ENCODE measurements at regions of chr10 and their contacts with region 1.

Region 1: DNA sequence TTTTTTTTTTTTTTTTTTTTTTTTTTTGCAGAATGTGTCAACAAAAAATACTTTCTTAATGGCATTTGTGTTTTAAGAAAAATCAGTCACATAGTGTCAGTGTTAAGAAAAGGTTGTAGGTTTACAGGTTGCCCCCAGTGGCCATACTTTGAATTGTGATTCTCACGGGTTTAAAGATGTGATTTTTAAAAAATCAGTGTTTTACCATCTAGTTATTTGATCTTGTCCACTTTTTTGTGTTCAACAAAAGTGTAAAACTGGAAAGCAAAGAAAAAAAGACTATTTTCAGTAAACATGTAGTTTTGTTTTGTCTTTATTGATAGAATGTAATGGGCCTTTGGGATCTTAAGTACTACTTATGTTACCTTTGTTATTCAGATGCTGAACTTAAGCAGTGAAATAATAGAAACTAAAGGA is 25.7 kb downstream of the SUV39H2 start:
- DNase-seq: peak in 4 of 5 donors; percentile 36 to 47 (median 42)
- H3K4me3 ChIP-seq: no peak overlapping the region
- H3K4me3 Mint-ChIP-seq: no peak overlapping the region
- H3K27ac ChIP-seq: no peak overlapping the region
- H3K27ac Mint-ChIP-seq: peak overlapping the region in 1 of 7 donors; percentile 43
- H3K4me1 ChIP-seq: peaks cover 8% of the 10 kb centered on the region
- H3K4me1 Mint-ChIP-seq: peaks cover 6 to 29% (median 9%) of the 10 kb centered on the region in 4 donors
- H3K27me3 ChIP-seq: no peaks in the 10 kb centered on the region
- H3K27me3 Mint-ChIP-seq: no peaks in the 10 kb centered on the region

Region 2: GRCh38 chr10:14801723-14802122 is 102.6 kb before region 1 on chr10:
- CTCF ChIA-PET with region 1: no interaction called
- POLR2A ChIA-PET with region 1: no interaction called
- intact Hi-C with region 1: no loop called
- DNase-seq: no peak
- H3K4me3 ChIP-seq: no peak overlapping the region
- H3K4me3 Mint-ChIP-seq: no peak overlapping the region
- H3K27ac ChIP-seq: no peak overlapping the region
- H3K27ac Mint-ChIP-seq: no peak overlapping the region
- H3K4me1 ChIP-seq: no peaks in the 10 kb centered on the region
- H3K4me1 Mint-ChIP-seq: no peaks in the 10 kb centered on the region
- H3K27me3 ChIP-seq: no peaks in the 10 kb centered on the region
- H3K27me3 Mint-ChIP-seq: peaks cover 0 to 2% of the 10 kb centered on the region in 2 donors

Region 3: GRCh38 chr10:14878266-14879054 is 25.9 kb before region 1 on chr10 and contains the start of gene SUV39H2:
- CTCF ChIA-PET with region 1: interaction called, 11 read pairs
- POLR2A ChIA-PET with region 1: interaction called, 9 read pairs
- intact Hi-C with region 1: loop called (anchors 2 kb)
- DNase-seq: peak; percentile 87 to 91 (median 90)
- H3K4me3 ChIP-seq: peak within 1 kb of the TSS; percentile 44 to 88
- H3K4me3 Mint-ChIP-seq: peak within 1 kb of the TSS; percentile 93 to 96 (median 94)
- H3K27ac ChIP-seq: peak within 1 kb of the TSS; percentile 84
- H3K27ac Mint-ChIP-seq: peak within 1 kb of the TSS; percentile 87 to 95 (median 94)
- H3K4me1 ChIP-seq: peaks cover 17% of the 10 kb centered on the region
- H3K4me1 Mint-ChIP-seq: peaks cover 13 to 48% (median 22%) of the 10 kb centered on the region in 4 donors
- H3K27me3 ChIP-seq: no peaks in the 10 kb centered on the region
- H3K27me3 Mint-ChIP-seq: no peaks in the 10 kb centered on the region
- total RNA-seq, gene SUV39H2: 5.0 to 5.7 TPM

Region 4: GRCh38 chr10:14889318-14889717 is 15.0 kb before region 1 on chr10:
- CTCF ChIA-PET with region 1: interaction called, 14 read pairs
- POLR2A ChIA-PET with region 1: no interaction called
- intact Hi-C with region 1: no loop called
- DNase-seq: peak in 2 of 5 donors; percentile 6 to 11
- H3K4me3 ChIP-seq: no peak overlapping the region
- H3K4me3 Mint-ChIP-seq: no peak overlapping the region
- H3K27ac ChIP-seq: no peak overlapping the region
- H3K27ac Mint-ChIP-seq: peak overlapping the region in 3 of 7 donors; percentile 2 to 49 (median 48)
- H3K4me1 ChIP-seq: peaks cover 3% of the 10 kb centered on the region
- H3K4me1 Mint-ChIP-seq: peaks cover 3 to 6% (median 6%) of the 10 kb centered on the region in 4 donors
- H3K27me3 ChIP-seq: no peaks in the 10 kb centered on the region
- H3K27me3 Mint-ChIP-seq: no peaks in the 10 kb centered on the region

Region 5: GRCh38 chr10:14918964-14919363 is 14.6 kb after region 1 on chr10:
- CTCF ChIA-PET with region 1: interaction called, 13 read pairs
- POLR2A ChIA-PET with region 1: no interaction called
- intact Hi-C with region 1: no loop called
- DNase-seq: no peak
- H3K4me3 ChIP-seq: no peak overlapping the region
- H3K4me3 Mint-ChIP-seq: no peak overlapping the region
- H3K27ac ChIP-seq: no peak overlapping the region
- H3K27ac Mint-ChIP-seq: peak overlapping the region in 1 of 7 donors; percentile 10
- H3K4me1 ChIP-seq: peaks cover 10% of the 10 kb centered on the region
- H3K4me1 Mint-ChIP-seq: peaks cover 10 to 15% (median 13%) of the 10 kb centered on the region in 4 donors
- H3K27me3 ChIP-seq: no peaks in the 10 kb centered on the region
- H3K27me3 Mint-ChIP-seq: no peaks in the 10 kb centered on the region